GM12878 (cell line): ENCODE measurements at regions of chr10 and their contacts with region 1.

Region 1: DNA sequence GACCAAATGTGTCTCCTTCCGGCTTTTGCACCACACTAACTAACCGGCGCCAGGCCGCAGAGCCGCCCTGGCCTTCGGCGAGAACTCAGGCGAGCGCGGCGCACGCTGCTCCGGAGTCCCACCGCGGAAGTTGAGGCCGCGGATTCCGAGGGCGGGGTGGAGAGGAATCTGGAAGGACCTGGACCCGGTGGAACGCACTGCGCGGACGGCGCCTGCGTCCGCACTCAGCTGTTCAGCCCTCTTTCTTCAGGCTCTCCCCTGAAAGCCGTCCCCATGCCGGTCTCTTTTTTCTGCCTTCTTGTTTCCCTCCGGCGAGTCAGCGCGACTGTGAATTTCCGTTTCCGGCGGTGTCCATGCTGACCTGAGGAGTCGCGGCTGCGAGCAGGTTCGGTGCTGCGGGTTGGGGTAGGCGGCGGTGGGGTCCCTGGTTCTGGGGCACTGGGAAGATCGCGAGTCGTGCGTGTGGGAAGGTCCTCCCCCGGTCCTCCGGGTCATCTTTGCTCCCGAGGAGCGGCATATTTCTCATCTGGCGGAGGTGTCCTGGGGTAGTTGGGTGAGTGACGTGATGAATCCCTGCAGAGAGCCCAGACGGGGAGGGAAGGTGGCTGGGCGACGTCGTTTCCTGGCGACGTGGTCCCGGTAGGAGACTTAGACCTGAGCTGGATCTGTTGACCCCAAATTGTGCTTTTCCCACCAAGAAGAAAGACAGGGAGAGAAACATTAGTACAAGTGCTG is at the start of gene BMS1:
- DNase-seq: peak; percentile 77
- ATAC-seq: peak; percentile 92
- H3K4me3 ChIP-seq: peak within 1 kb of the TSS; percentile 81
- H3K27ac ChIP-seq: peak within 1 kb of the TSS; percentile 87
- H3K4me1 ChIP-seq: no peaks in the 10 kb centered on the region
- H3K27me3 ChIP-seq: no peaks in the 10 kb centered on the region
- CTCF ChIP-seq: no peak
- EP300 ChIP-seq: peak in 1 of 2 experiments; percentile 48; a peak in 1 of 4 replicates
- POLR2A ChIP-seq: peak; percentile 94
- RAD21 ChIP-seq: no peak
- polyA plus RNA-seq, gene BMS1: 10.1 to 16.8 TPM

Region 2: DNA sequence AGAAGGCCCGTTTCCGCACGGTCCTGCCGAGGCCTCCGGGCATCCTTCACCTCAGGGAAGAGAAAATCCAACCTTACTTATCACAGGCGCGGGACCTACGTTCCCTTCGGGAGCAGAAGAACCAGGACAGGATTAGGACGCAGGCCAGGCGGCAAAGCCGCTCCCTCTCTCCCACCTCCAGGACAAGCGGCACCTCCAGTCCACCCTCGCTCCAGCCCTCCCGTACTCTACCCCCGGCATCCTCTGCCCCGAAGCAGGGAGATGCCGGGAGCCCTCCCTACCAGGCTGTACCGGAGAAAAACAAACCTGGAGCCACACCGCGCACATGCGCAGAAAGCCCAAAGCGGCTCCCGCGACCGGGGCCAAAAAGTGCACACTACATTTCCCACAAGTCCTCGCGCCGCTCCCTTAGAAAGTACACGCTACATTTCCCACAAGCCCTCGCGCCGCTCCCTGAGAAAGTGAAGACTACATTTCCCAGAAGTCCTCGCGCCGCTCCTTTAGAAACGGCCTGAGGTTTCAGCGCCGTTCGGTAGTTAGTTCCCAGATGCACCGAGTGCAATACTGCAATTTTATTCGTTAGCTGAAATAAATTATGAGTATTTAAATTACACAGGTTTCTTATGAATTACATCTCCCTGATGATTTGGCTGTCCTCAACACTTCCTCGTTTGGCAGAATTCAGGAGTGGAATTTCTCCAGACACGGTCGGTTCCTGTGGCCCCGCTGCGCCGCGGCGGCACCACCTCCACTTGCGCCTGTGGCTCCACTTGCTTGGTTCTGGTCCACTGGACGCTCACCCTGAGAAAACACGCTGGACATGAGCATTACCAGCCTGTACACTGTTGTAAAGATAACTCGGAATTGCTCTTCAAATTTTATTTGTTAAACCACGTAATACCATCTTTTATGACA is 229.9 kb before region 1 on chr10:
- CTCF ChIA-PET with region 1: no interaction called
- POLR2A ChIA-PET with region 1: no interaction called
- RAD21 ChIA-PET with region 1: no interaction called
- SMC1A ChIA-PET with region 1: no interaction called
- in situ Hi-C with region 1: loop called (anchors 5 kb)
- intact Hi-C with region 1: loop called (anchors 2 kb)
- DNase-seq: peak; percentile 89
- ATAC-seq: peak; percentile 93
- H3K4me3 ChIP-seq: peak overlapping the region; percentile 84
- H3K27ac ChIP-seq: peak overlapping the region; percentile 69
- H3K4me1 ChIP-seq: no peaks in the 10 kb centered on the region; the same call in 1 of the 2 replicates
- H3K27me3 ChIP-seq: no peaks in the 10 kb centered on the region
- CTCF ChIP-seq: no peak
- EP300 ChIP-seq: no peak
- POLR2A ChIP-seq: no peak
- RAD21 ChIP-seq: no peak